SK-N-SH (cell line): ENCODE measurements at regions of chr5 and their contacts with region 1.

Region 1: GRCh38 chr5:150486402-150487198 is 21.3 kb upstream of the NDST1 start:
- DNase-seq: peak; percentile 87
- H3K4me3 ChIP-seq: peak overlapping the region; percentile 86 to 89
- H3K27ac ChIP-seq: peak overlapping the region; percentile 80 to 92
- H3K4me1 ChIP-seq: peaks cover 38 to 52% of the 10 kb centered on the region in 2 experiments
- H3K27me3 ChIP-seq: no peaks in the 10 kb centered on the region
- CTCF ChIP-seq: no peak
- EP300 ChIP-seq: no peak
- RAD21 ChIP-seq: no peak

Region 2: GRCh38 chr5:150412319-150413175 is 74.1 kb before region 1 on chr5 and contains the start of gene CD74:
- CTCF ChIA-PET with region 1: no interaction called
- POLR2A ChIA-PET with region 1: no interaction called
- DNase-seq: peak; percentile 53
- H3K4me3 ChIP-seq: no peak within 1 kb of the TSS
- H3K27ac ChIP-seq: no peak within 1 kb of the TSS
- H3K4me1 ChIP-seq: peaks cover 4 to 8% of the 10 kb centered on the region in 2 experiments; a peak in 3 of 4 replicates
- H3K27me3 ChIP-seq: no peaks in the 10 kb centered on the region
- CTCF ChIP-seq: no peak
- EP300 ChIP-seq: no peak
- RAD21 ChIP-seq: no peak
- polyA plus RNA-seq, gene CD74: 0.15 and 0.26 TPM in 2 replicates

Region 3: GRCh38 chr5:150449517-150450339 is 36.9 kb before region 1 on chr5 and contains the start of gene RPS14:
- CTCF ChIA-PET with region 1: interaction called, 10 read pairs
- POLR2A ChIA-PET with region 1: interaction called, 16 read pairs
- DNase-seq: peak; percentile 94
- H3K4me3 ChIP-seq: peak within 1 kb of the TSS; percentile 88 to 98
- H3K27ac ChIP-seq: peak within 1 kb of the TSS; percentile 93 to 97
- H3K4me1 ChIP-seq: peaks cover 17 to 19% of the 10 kb centered on the region in 2 experiments; a peak in 3 of 4 replicates
- H3K27me3 ChIP-seq: no peaks in the 10 kb centered on the region
- CTCF ChIP-seq: peak; percentile 82
- EP300 ChIP-seq: no peak; a peak in 2 of 4 replicates
- RAD21 ChIP-seq: no peak
- polyA plus RNA-seq, gene RPS14: 10,227 and 11,441 TPM in 2 replicates

Region 4: DNA sequence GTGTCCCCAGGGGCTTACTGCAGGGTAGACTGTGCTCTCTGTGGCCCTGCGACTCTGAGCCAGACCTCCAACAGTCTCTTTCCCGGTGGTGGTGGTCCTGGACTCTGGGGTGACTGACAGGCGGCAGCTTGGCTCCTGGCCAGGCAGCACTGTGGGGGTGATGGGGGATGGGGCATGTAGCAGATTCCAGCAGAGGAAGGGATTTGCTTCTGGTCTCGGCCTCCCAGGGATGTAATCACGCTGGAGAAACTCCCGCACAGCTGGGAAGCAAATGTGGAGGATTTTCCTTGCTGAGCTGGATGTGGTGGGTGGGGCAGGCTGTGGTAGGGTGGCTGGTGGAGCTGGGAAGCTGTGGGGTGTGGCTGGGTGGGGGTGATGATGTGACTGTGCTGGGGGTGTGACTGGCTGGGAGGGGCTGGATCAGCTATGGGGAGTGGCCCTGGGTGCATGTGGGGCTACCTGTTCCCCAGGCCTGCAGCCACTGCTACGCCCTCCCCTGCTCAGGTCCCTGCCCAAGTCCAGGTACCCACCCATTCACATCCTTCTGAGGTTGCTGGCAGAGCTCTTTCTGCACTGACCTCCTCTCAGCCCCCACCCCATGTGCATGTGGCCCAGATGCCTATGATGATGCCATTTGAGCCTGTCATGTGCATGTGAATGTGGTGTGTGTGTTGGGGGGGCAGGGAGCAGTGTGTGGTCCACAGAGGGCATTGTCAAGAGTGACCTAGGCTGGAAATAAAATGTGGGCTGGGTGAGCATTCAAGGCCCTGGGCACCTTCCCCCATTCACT is 25.2 kb after region 1 on chr5:
- CTCF ChIA-PET with region 1: interaction called, 6 read pairs
- POLR2A ChIA-PET with region 1: interaction called, 12 read pairs
- DNase-seq: peak; percentile 70
- H3K4me3 ChIP-seq: no peak overlapping the region
- H3K27ac ChIP-seq: peak overlapping the region in 1 of 2 experiments; percentile 81; a peak in 2 of 4 replicates
- H3K4me1 ChIP-seq: peaks cover 40 to 82% of the 10 kb centered on the region in 2 experiments
- H3K27me3 ChIP-seq: no peaks in the 10 kb centered on the region
- CTCF ChIP-seq: no peak
- EP300 ChIP-seq: no peak
- RAD21 ChIP-seq: no peak

Region 5: DNA sequence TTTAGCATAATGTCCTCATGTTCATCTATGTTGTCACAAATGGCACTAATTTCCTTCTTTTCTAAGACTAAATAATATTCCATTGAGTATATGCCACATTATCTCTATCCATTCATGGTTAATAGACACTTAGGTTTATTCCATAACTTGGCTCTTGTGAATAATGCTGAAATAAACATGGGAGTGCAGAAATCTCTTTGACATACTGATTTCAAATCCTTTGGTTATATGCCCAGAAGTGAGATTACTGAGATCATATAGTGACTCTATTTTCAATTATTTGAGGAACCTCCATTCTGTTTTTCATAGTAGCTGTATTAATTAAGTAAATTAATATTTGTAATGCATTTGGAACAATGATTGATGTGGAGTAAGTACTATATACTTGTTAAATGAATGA is 304.9 kb after region 1 on chr5:
- CTCF ChIA-PET with region 1: no interaction called
- POLR2A ChIA-PET with region 1: no interaction called
- DNase-seq: no peak
- H3K4me3 ChIP-seq: no peak overlapping the region
- H3K27ac ChIP-seq: peak overlapping the region; percentile 43 to 94; a peak in 3 of 4 replicates
- H3K4me1 ChIP-seq: peaks cover 14 to 46% of the 10 kb centered on the region in 2 experiments
- H3K27me3 ChIP-seq: no peaks in the 10 kb centered on the region
- CTCF ChIP-seq: no peak
- EP300 ChIP-seq: no peak
- RAD21 ChIP-seq: no peak